Activated CD4-positive, alpha-beta memory T cell treated with anti-CD3 and anti-CD28 coated beads for 36 hours (primary cell): ENCODE measurements at regions of chr20 and their contacts with region 1.

Region 1: DNA sequence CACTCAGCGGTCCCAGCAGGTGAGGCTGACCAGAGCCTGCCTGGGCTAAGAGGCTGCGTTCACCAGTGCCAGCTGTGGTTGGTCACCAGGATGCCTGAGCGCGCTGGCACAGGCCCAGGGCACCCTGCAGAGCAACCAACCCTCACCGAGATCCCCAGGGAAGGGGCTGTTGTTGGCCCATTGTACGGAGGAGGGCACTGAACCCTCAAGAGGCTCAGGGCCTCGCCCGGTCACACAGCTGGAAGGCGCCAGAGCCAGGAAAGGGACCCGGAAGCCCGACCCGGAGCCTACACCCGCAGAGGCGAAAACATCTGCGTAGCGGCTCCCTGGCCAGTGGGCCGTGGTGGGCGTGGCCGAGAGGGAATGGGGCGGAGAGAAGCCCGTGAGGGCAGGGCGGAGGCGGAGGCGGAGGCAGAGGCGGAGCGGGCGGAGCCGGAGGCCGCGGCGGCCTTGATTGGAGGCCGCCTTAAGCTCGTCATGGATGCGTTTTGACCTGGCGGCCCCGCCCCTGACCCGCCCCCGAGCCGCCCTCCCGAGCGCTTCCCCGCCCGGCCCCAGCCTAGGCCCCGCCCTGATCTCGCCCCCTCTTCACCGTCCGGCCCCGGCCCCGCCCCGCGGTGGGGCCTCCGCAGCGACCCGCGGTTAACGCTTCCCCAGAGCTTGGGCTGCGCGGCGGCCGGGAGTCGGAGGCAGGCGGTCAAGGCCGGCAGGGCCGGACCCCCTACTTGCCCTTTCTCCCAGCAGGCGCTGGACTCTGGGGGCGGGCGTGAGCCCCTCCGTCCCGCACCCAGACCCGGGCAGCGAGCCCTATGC is 2.2 kb upstream of the MRGBP start:
- DNase-seq: peak; percentile 98
- H3K4me3 Mint-ChIP-seq: peak overlapping the region; percentile 79
- H3K27ac Mint-ChIP-seq: peak overlapping the region; percentile 81
- H3K4me1 Mint-ChIP-seq: peaks cover 29% of the 10 kb centered on the region
- H3K27me3 Mint-ChIP-seq: no peaks in the 10 kb centered on the region

Region 2: DNA sequence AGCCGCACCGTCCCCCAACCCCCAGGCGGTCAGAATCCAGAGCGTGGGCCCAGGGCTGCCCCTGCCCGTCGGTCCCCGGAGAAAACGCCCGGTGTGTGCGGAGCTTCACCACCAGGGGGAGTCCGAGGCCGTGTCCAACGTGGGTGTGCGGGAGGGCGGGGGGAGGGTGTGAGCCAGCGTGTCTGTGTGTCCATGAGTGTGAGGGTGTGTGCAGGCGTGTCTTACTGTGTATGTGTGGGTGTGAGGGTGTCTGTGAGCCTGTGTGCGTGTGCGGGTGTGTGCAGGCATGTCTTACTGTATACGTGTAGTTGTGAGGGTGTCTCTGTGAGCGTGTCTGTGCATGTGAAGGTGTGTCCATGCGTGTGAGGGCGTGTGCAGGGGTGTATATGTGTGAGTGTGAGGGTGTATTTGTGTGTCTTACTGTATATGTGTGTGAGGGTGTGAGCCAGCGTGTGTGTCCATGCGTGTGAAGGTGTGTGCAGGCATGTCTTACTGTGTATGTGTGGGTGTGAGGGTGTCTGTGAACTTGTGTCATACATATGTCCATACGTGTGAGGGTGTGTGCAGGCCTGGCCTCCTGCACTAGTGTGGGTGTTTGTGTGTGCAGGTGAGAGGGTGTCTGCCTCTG is 293.8 kb before region 1 on chr20:
- CTCF ChIA-PET with region 1: interaction called, 22 read pairs
- POLR2A ChIA-PET with region 1: no interaction called
- intact Hi-C with region 1: loop called (anchors 1 kb)
- DNase-seq: peak; percentile 87
- H3K4me3 Mint-ChIP-seq: no peak overlapping the region
- H3K27ac Mint-ChIP-seq: peak overlapping the region; percentile 26
- H3K4me1 Mint-ChIP-seq: peaks cover 29% of the 10 kb centered on the region
- H3K27me3 Mint-ChIP-seq: peaks cover 3% of the 10 kb centered on the region

Region 3: DNA sequence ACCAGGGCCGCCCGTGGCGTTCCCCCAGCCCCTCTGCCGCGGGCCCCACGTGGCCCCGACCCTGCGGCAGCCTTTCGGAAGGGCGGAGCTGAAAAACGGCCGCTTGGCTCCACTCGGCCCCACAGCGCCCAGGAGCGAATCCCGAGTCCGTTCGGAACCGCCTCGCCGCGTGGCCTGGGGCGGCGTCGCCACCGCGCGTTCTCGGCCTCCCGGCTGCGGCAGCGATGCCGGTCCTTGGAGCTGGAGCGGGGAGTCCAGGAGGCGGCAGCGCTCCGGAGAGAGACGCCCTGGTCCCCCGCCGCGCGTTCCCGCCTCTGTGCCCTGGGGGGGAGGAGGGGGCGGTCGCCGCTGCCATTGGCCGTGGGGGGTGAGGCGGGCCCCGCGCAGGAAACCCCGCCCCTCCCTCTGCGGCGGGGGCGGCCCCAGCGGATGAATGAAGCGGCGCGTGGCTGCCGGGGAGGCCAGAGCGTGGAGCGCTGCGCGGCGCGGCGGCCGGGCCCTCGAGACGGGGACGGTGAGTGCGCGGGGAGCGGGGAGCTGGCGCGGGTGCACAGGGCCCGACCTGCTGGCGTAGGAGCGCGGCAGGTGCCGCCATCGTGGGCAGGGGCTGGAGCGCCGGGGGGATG is 152.0 kb before region 1 on chr20 and contains the start of gene SLCO4A1:
- CTCF ChIA-PET with region 1: interaction called, 17 read pairs
- POLR2A ChIA-PET with region 1: interaction called, 4 read pairs
- intact Hi-C with region 1: no loop called
- DNase-seq: peak; percentile 90
- H3K4me3 Mint-ChIP-seq: peak within 1 kb of the TSS; percentile 77
- H3K27ac Mint-ChIP-seq: peak within 1 kb of the TSS; percentile 67
- H3K4me1 Mint-ChIP-seq: no peaks in the 10 kb centered on the region
- H3K27me3 Mint-ChIP-seq: no peaks in the 10 kb centered on the region
- total RNA-seq, gene SLCO4A1: 29.6 to 30.7 TPM

Region 4: DNA sequence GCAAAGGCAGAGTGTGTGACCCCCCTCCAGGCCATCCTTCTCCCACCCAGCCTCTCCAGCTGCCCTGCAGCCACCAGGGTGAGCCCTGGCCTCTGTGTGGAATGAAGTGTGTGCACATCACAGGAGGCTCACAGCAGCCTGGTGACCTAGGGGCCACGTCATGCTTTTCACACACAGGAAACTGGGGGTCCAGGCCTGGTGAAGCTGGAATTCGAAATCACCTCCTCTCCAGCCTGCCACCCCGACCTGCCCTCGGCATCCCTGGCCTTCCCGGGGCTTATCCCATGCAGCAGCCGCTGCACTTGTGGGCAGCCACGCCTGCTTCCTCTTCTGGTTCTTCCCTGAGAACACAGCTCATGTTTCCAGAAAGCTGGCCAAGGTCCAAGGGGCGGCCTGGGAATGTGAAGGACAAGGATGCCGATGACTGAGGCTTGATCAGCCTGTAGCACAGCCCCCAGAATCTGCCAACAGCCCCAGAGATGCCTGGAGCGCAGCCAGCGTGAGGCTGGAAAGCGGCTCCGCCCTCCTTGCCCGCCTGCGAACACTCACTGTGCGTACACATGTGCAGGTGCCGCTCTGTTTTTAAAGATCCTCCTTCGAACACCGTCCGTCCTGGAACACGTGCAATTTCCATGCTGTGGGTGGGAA is 89.7 kb before region 1 on chr20:
- CTCF ChIA-PET with region 1: interaction called, 4 read pairs
- POLR2A ChIA-PET with region 1: interaction called, 3 read pairs
- intact Hi-C with region 1: loop called (anchors 1 kb)
- DNase-seq: no peak
- H3K4me3 Mint-ChIP-seq: no peak overlapping the region
- H3K27ac Mint-ChIP-seq: no peak overlapping the region
- H3K4me1 Mint-ChIP-seq: peaks cover 8% of the 10 kb centered on the region
- H3K27me3 Mint-ChIP-seq: peaks cover 11% of the 10 kb centered on the region

Region 5: GRCh38 chr20:62776692-62777527 is 17.2 kb before region 1 on chr20:
- CTCF ChIA-PET with region 1: interaction called, 10 read pairs
- POLR2A ChIA-PET with region 1: no interaction called
- intact Hi-C with region 1: no loop called
- DNase-seq: peak; percentile 84
- H3K4me3 Mint-ChIP-seq: peak overlapping the region; percentile 15
- H3K27ac Mint-ChIP-seq: peak overlapping the region; percentile 89
- H3K4me1 Mint-ChIP-seq: peaks cover 41% of the 10 kb centered on the region
- H3K27me3 Mint-ChIP-seq: no peaks in the 10 kb centered on the region

Region 6: GRCh38 chr20:62921119-62921687 is 127.1 kb after region 1 on chr20:
- CTCF ChIA-PET with region 1: no interaction called
- POLR2A ChIA-PET with region 1: no interaction called
- intact Hi-C with region 1: loop called (anchors 5 kb)
- DNase-seq: peak; percentile 82
- H3K4me3 Mint-ChIP-seq: peak overlapping the region; percentile 64
- H3K27ac Mint-ChIP-seq: peak overlapping the region; percentile 83
- H3K4me1 Mint-ChIP-seq: peaks cover 74% of the 10 kb centered on the region
- H3K27me3 Mint-ChIP-seq: no peaks in the 10 kb centered on the region